GM18951 (cell line): ENCODE measurements at regions of chr2 and their contacts with region 1.

Region 1: DNA sequence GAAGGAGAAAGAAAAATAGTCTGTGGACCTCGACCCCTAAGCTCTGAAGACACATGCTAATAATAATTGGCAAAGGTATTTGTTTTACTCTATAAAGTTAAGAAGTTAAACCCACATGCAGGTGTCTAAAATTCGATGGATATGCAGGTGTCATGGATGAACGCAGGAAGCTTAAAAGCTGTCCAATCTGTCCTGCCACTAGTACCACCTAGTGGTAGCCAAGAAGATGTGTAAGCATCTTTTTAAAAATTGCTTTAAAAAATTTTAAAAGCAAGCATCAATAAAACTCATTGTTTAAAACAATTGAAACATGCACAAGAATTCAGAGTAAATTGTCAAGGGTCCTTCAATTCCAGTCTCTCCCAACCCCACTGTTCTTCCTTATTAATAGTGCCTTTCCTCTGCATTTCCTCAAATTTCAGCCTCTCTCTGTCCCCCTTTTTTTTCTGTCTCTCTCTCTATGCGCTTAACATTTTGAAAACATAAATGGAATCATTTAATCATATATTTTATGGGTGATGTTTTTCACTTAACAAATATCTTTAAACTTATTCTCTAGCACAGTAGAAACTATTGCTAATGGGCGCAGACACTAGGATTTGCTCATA is 30.6 kb upstream of the PPP3R1 start:
- POLR2A ChIP-seq: no peak

Region 2: GRCh38 chr2:67656875-67657274 is 626.0 kb before region 1 on chr2:
- in situ Hi-C with region 1: no loop called
- POLR2A ChIP-seq: no peak

Region 3: DNA sequence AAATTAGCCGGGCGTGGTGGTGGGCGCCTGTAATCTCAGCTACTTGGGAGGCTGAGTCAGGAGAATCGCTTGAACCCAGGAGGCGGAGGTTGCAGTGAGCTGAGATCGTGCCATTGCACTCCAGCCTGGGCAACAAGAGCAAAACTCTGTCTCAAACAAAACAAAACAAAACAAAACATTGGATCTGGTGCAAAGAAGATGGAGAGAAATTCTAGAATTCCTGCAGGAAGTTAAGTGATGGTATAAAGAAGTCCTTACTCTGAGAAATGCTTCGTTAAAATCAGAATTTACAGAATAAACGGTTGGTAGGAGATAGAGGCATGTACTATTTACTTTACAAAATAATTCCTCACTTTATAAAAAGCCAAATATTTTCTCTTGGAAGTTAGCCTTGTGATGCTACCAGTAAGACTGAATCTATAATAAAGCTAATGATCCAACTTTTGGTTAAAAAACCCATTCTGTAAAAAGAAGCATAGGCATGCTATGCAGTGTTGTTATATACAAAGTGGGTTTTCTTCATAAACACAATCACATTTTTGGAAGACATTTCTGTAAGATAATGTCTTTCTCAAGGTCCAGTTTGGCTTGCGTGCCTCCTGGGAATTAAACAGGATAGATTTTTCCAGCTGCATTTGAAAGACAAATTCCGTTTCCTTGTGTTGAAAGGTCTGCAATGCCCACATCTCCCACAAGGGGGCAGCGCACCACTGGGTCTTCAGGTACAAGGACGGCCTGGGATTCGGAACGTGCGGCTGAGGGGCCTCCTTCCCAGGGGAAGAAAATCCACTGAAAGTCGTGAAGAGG is 160.8 kb before region 1 on chr2:
- in situ Hi-C with region 1: loop called (anchors 10 kb)
- POLR2A ChIP-seq: no peak